Naive thymus-derived CD4-positive, alpha-beta T cell (primary cell): ENCODE measurements at regions of chr20 and their contacts with region 1.

Region 1: DNA sequence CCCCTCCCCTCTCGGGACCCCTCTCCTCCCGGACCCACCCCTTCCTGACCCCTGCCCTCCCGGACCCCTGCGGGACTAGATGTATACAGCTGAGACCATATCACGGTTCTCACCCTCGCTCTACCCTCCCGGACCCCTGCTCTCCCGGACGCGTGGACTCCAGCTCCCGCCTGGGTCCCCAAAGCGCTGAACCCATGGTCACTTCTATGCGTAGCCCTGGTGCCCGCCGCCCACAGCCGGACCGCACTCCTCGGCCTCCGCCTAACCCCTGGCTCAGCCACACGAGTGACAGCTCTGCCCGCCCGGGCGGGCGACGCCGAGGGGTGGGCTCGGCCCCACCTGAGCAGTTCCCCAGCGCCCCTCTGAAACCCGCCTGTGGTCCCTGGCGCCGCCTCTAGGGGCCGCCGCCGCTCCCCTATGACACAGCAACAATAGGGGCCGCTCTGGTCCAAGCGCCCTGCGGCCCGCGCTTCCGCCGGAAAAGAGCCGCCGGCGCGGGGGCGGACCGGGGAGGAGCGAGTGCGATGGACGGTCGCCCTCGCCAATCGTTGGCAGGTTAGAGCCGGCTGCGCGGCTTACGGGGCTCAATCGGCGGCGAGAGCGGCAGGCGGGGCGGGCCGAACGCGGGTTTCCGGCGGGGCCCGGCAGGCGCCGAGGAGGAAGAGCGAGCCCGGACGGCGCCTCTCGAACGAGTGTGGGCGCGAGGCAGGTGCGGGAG is at the start of gene ADRM1:
- DNase-seq: peak; percentile 91 to 99 (median 96)
- ATAC-seq: peak; percentile 94
- H3K4me3 ChIP-seq: peak within 1 kb of the TSS; percentile 94
- H3K4me3 Mint-ChIP-seq: peak within 1 kb of the TSS; percentile 89 to 98 (median 96)
- H3K27ac ChIP-seq: peak within 1 kb of the TSS; percentile 85
- H3K27ac Mint-ChIP-seq: peak within 1 kb of the TSS; percentile 90 to 100 (median 96)
- H3K4me1 ChIP-seq: peaks cover 17 to 19% of the 10 kb centered on the region in 2 donors
- H3K4me1 Mint-ChIP-seq: peaks cover 17 to 32% (median 22%) of the 10 kb centered on the region in 7 donors
- H3K27me3 ChIP-seq: no peaks in the 10 kb centered on the region
- H3K27me3 Mint-ChIP-seq: no peaks in the 10 kb centered on the region
- total RNA-seq, gene ADRM1: 51.3 to 117 (median 55.0) TPM

Region 2: DNA sequence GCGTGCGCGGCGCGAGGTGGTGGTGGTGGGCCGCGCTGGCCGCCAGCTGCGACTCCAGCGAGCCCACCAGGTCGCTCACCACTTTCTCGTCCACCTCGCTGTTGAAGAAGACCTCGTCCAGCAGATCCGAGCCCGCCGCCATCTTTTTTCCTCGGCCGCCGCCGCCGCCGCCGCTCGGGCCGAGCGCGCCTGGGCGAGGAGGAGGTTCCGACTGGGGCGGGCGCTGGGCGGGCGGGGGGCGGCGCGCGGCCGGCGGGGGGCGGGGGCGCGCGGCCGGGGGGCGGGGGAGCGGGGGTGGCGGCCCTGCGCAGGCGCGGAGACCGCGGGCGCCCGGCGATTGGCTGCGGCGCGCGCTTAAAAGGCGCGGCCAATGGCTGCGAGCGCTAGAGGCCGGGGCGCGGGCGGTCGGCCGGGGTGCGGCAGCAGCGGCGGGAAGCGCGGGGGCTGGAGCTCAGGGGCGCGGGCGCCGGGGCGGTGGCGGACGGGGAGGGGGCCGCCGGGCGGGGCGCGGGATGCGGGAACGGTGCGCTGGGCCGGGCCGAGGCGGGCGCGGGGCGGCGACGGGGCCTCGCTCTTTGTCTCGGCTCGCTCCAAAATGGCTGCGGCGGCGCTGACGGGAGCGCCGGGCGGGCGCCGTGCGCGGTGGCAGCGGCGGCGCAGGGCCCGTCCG is 236.7 kb before region 1 on chr20 and contains the start of gene TAF4:
- CTCF ChIA-PET with region 1: no interaction called
- POLR2A ChIA-PET with region 1: interaction called, 6 read pairs
- intact Hi-C with region 1: loop called (anchors 1 to 5 kb)
- DNase-seq: peak; percentile 70 to 89 (median 81)
- ATAC-seq: peak; percentile 85
- H3K4me3 ChIP-seq: peak within 1 kb of the TSS; percentile 64
- H3K4me3 Mint-ChIP-seq: peak within 1 kb of the TSS; percentile 82 to 92 (median 89)
- H3K27ac ChIP-seq: peak within 1 kb of the TSS; percentile 78
- H3K27ac Mint-ChIP-seq: peak within 1 kb of the TSS; percentile 89 to 97 (median 93)
- H3K4me1 ChIP-seq: peaks cover 23 to 29% of the 10 kb centered on the region in 2 donors
- H3K4me1 Mint-ChIP-seq: peaks cover 25 to 56% (median 50%) of the 10 kb centered on the region in 7 donors
- H3K27me3 ChIP-seq: no peaks in the 10 kb centered on the region
- H3K27me3 Mint-ChIP-seq: peaks cover 0 to 2% (median 0%) of the 10 kb centered on the region in 5 donors
- total RNA-seq, gene TAF4: 19.8 to 43.7 (median 23.7) TPM

Region 3: DNA sequence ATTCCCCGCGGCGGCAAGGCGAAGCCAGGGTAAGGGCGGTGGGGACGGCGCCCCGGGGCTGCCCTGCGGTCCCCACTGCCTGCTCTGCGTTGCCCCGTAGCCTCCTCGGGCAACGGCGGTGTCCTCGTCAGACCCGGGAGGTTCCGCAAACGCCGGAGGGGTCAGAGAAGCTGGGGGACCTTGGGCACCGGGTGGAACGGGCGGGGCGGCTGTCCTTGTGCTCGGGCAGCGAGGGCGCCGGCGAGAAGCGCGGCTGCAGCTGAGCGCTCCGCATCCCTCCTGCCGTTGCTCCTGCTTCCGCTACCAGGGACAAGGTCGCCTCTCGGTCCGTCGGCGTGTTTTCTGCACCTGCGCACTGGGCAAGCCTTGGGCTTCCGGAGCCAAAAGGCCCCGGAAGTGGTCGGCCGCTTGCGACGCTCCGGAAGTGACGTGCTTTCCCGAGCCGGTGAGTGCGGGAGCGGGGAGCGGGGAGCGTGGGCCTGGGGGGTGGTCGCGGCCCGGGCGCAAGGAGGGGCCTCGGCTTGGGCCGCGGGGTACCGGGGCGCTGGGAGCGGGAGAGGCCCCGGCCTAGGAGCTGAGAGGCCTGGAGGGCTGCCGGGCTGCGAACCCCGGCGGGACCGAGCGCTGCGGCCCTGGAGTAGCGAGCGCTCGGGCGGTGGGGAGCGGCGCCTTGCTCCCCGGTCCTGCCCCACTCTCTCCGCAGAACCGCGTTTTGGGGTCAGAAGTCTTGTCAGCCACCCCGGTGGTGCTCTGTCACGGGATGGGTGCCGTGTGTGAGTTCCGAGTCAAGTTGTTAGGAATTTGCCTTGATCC is 119.7 kb before region 1 on chr20 and contains the start of gene MTG2:
- CTCF ChIA-PET with region 1: no interaction called
- POLR2A ChIA-PET with region 1: no interaction called
- intact Hi-C with region 1: loop called (anchors 1 kb)
- DNase-seq: peak; percentile 81 to 94 (median 93)
- ATAC-seq: peak; percentile 95
- H3K4me3 ChIP-seq: peak within 1 kb of the TSS; percentile 87
- H3K4me3 Mint-ChIP-seq: peak within 1 kb of the TSS; percentile 84 to 95 (median 90)
- H3K27ac ChIP-seq: peak within 1 kb of the TSS; percentile 92
- H3K27ac Mint-ChIP-seq: peak within 1 kb of the TSS; percentile 90 to 97 (median 95)
- H3K4me1 ChIP-seq: peaks cover 9 to 16% of the 10 kb centered on the region in 2 donors
- H3K4me1 Mint-ChIP-seq: peaks cover 15 to 55% (median 42%) of the 10 kb centered on the region in 7 donors
- H3K27me3 ChIP-seq: no peaks in the 10 kb centered on the region
- H3K27me3 Mint-ChIP-seq: no peaks in the 10 kb centered on the region
- total RNA-seq, gene MTG2: 20.4 to 51.5 (median 41.8) TPM

Region 4: DNA sequence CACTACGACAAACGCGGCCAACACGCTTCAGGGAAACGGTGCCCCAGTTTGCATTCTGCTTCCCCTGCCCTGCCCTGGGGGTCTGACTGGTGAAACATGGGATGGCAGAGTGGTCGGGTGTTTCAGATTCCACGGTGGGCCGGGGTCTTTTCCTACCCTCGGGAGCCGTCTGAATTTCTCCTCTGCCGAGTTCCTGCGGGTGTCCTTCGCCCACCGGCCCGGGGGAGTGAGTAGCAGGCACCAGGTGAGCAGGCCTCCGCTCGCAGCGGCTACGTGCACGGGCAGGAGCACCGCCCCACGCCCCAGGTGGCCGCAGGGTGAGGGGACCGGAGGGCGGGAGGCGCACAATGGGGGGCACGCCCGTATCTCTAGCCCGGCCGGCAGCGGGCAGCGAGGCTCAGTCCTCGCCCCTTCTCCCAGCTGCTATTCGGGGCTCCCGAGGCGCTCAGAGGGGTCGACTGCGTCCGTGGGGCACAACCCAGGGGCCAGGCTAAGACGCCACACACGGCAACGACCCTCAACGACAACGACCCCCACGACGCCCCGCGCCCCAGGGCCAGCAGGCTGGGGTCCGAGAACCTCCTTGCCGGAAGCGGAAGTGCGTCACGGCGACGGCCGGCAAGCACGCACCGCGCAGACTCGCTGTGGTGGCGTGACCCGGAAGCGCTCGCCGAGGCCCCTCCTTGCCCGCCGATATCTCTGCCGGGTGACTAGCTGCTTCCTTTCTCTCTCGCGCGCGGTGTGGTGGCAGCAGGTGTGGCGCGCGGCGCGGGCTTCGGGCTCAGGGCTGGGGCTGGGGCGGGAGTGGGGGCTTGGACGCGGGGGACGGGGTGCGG is 84.1 kb after region 1 on chr20 and contains the start of gene RPS21:
- CTCF ChIA-PET with region 1: interaction called, 5 read pairs
- POLR2A ChIA-PET with region 1: interaction called, 9 read pairs
- intact Hi-C with region 1: loop called (anchors 1 kb)
- DNase-seq: peak; percentile 89 to 95 (median 92)
- ATAC-seq: peak; percentile 95
- H3K4me3 ChIP-seq: peak within 1 kb of the TSS; percentile 94
- H3K4me3 Mint-ChIP-seq: peak within 1 kb of the TSS; percentile 90 to 96 (median 92)
- H3K27ac ChIP-seq: peak within 1 kb of the TSS; percentile 98
- H3K27ac Mint-ChIP-seq: peak within 1 kb of the TSS; percentile 89 to 96 (median 93)
- H3K4me1 ChIP-seq: peaks cover 24 to 28% of the 10 kb centered on the region in 2 donors
- H3K4me1 Mint-ChIP-seq: peaks cover 40 to 59% (median 50%) of the 10 kb centered on the region in 7 donors
- H3K27me3 ChIP-seq: no peaks in the 10 kb centered on the region
- H3K27me3 Mint-ChIP-seq: no peaks in the 10 kb centered on the region
- total RNA-seq, gene RPS21: 2,026 to 3,407 (median 3,308) TPM

Region 5: DNA sequence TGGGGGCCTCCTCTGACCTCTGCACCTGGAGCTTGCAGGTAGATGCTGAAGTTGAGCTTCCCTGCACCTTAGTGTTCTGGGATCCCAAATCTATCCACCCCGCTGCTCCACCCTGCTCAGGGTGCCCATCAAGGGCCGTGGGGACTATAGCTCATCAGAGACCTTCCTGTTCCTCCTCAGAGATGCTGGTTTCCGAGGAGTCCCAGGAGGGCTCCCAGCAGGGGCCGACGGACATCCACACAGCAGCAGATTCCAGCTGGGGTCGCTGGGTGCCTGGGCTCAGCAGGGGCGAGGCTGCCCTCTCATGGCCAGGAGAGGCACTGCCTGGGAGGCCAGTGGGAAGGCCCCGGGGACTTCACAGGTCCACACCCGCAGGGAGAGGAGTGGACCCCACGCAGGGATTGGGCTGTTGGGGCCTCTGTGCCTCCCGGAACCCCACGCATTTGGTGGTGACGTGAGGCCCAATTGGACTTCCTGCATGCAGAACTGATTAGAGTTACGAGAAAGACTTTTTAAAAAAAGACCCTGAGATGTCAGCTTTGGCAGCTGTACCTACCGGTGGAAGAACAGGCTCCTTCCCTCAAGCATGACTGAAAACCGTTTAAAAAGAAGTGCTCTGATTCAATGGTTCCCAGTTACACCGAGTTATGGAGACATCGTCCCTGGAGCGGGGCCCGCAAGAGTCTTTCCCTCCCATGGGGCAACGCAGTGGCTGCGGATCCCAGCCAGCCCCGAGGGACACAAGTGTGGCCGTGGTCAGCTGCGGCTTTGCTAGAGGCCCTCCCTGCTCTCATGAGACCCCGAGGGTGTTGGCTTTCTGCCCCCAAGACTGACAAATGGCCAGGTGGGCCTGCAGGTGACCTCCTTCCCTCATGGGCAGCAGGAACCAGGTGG is 314.5 kb after region 1 on chr20:
- CTCF ChIA-PET with region 1: no interaction called
- POLR2A ChIA-PET with region 1: no interaction called
- intact Hi-C with region 1: loop called (anchors 2 to 5 kb)
- DNase-seq: peak; percentile 42 to 82 (median 57)
- ATAC-seq: peak; percentile 86
- H3K4me3 ChIP-seq: no peak overlapping the region
- H3K4me3 Mint-ChIP-seq: peak overlapping the region in 4 of 10 donors; percentile 42 to 82 (median 64)
- H3K27ac ChIP-seq: no peak overlapping the region
- H3K27ac Mint-ChIP-seq: peak overlapping the region in 5 of 9 donors; percentile 28 to 90 (median 72)
- H3K4me1 ChIP-seq: peaks cover 16 to 27% of the 10 kb centered on the region in 2 donors
- H3K4me1 Mint-ChIP-seq: peaks cover 7 to 35% (median 19%) of the 10 kb centered on the region in 7 donors
- H3K27me3 ChIP-seq: no peaks in the 10 kb centered on the region
- H3K27me3 Mint-ChIP-seq: peaks cover 0 to 9% (median 0%) of the 10 kb centered on the region in 5 donors

Region 6: GRCh38 chr20:62926239-62927104 is 624.0 kb after region 1 on chr20 and contains the start of gene DIDO1:
- CTCF ChIA-PET with region 1: no interaction called
- POLR2A ChIA-PET with region 1: no interaction called
- intact Hi-C with region 1: loop called in 1 of 2 experiments (anchors 2 kb)
- DNase-seq: peak; percentile 81 to 93 (median 89)
- ATAC-seq: peak; percentile 92
- H3K4me3 ChIP-seq: peak within 1 kb of the TSS; percentile 84
- H3K4me3 Mint-ChIP-seq: peak within 1 kb of the TSS; percentile 94 to 99 (median 96)
- H3K27ac ChIP-seq: peak within 1 kb of the TSS; percentile 95
- H3K27ac Mint-ChIP-seq: peak within 1 kb of the TSS; percentile 90 to 96 (median 94)
- H3K4me1 ChIP-seq: peaks cover 53 to 57% of the 10 kb centered on the region in 2 donors
- H3K4me1 Mint-ChIP-seq: peaks cover 48 to 74% (median 69%) of the 10 kb centered on the region in 7 donors
- H3K27me3 ChIP-seq: no peaks in the 10 kb centered on the region
- H3K27me3 Mint-ChIP-seq: no peaks in the 10 kb centered on the region
- total RNA-seq, gene DIDO1: 66.1 to 139 (median 77.4) TPM